Activated CD4-positive, alpha-beta T cell treated with anti-CD3 and anti-CD28 coated beads, Interleukin-2, amount 10 ng/mL, durations not matched to agents 24 days and 14 days (primary cell): ENCODE measurements at regions of chr10 and their contacts with region 1.

Region 1: GRCh38 chr10:43606322-43607198 is at the start of gene ZNF485:
- DNase-seq: peak; percentile 87
- H3K4me3 Mint-ChIP-seq: peak within 1 kb of the TSS; percentile 85
- H3K27ac Mint-ChIP-seq: peak within 1 kb of the TSS; percentile 83
- H3K4me1 Mint-ChIP-seq: peaks cover 24% of the 10 kb centered on the region
- H3K27me3 Mint-ChIP-seq: no peaks in the 10 kb centered on the region
- total RNA-seq, gene ZNF485: 7.1 and 9.2 TPM in 2 replicates

Region 2: GRCh38 chr10:42552493-42553407 is 1053.8 kb before region 1 on chr10:
- intact Hi-C with region 1: loop called (anchors 5 kb)
- DNase-seq: peak; percentile 98
- H3K4me3 Mint-ChIP-seq: peak overlapping the region; percentile 94
- H3K27ac Mint-ChIP-seq: peak overlapping the region; percentile 97
- H3K4me1 Mint-ChIP-seq: peaks cover 27% of the 10 kb centered on the region
- H3K27me3 Mint-ChIP-seq: no peaks in the 10 kb centered on the region

Region 3: DNA sequence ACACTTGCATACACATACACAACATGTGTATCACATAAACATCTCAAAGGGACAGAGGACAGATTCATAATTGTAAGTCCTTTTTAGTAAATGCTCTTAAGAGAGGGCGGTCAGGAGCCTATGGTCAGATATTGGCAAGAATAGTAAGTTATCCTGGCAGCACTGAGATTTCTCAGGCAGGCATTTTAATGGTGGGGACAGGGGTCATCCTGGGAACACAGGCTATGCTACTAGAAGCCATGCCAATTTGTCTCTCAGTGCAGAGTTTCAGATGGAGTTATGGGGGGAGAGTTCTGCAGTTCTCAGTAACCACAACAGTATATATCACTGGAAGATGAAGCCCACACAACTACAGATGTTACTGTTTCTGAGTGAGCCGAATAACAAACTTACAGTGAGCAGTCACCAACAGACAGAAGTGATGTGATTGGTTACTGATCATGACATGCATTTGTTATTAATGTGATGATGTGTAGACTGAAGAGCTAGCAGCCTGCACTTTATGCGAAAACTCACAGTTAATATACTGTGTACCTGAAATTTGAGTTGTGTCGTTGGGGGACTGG is 153.2 kb before region 1 on chr10:
- intact Hi-C with region 1: no loop called
- DNase-seq: no peak
- H3K4me3 Mint-ChIP-seq: peak overlapping the region; percentile 47
- H3K27ac Mint-ChIP-seq: peak overlapping the region; percentile 85
- H3K4me1 Mint-ChIP-seq: peaks cover 40% of the 10 kb centered on the region
- H3K27me3 Mint-ChIP-seq: no peaks in the 10 kb centered on the region

Region 4: GRCh38 chr10:43594944-43595589 is 11.5 kb before region 1 on chr10:
- intact Hi-C with region 1: loop called (anchors 1 kb)
- DNase-seq: peak; percentile 84
- H3K4me3 Mint-ChIP-seq: peak overlapping the region; percentile 69
- H3K27ac Mint-ChIP-seq: peak overlapping the region; percentile 85
- H3K4me1 Mint-ChIP-seq: peaks cover 24% of the 10 kb centered on the region
- H3K27me3 Mint-ChIP-seq: peaks cover 10% of the 10 kb centered on the region

Region 5: DNA sequence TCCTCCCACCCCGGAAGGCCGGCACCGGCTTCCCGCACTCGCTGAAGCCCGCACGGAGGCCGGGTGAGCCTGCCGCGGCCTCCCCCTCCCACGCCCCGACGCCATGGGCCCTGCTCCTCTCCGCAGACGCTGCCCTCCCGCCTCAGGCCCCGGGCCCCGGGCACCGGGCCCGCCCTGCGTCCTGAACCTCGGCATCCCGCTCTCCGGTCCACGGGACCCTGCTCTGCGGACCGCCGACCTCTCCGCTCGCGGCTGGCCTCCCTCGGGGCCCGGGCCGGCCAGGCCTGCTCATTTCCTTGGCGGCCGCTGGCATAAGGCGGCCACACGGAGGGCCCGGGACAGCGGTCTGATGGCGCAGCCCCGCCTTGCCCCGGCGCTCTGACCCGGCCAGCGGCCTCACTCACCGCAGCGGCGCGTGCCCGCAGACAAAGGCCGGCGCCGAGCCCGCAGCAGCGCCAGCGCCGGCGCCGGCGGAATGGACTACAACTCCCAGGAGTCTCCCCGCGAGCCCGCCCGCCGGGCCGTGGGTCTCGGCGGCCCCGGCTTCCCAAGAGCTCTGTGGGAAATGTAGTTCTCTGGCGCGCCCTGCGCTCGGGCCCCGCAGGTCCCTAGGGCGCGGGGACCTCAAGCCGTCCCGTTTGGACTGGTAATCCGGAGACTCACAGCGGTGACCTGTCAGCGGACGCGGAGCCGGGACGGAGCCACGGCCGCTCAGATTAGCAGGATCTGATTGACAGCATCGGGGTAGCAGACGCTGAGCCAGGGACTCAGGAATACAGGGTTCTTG is 42.0 kb after region 1 on chr10 and contains the start of gene ZNF32:
- intact Hi-C with region 1: loop called (anchors 1 kb)
- DNase-seq: peak; percentile 95
- H3K4me3 Mint-ChIP-seq: peak within 1 kb of the TSS; percentile 91
- H3K27ac Mint-ChIP-seq: peak within 1 kb of the TSS; percentile 89
- H3K4me1 Mint-ChIP-seq: peaks cover 6% of the 10 kb centered on the region
- H3K27me3 Mint-ChIP-seq: peaks cover 12% of the 10 kb centered on the region
- total RNA-seq, gene ZNF32: 14.9 and 15.2 TPM in 2 replicates

Region 6: GRCh38 chr10:44240584-44241205 is 634.1 kb after region 1 on chr10:
- intact Hi-C with region 1: no loop called
- DNase-seq: no peak
- H3K4me3 Mint-ChIP-seq: no peak overlapping the region
- H3K27ac Mint-ChIP-seq: no peak overlapping the region
- H3K4me1 Mint-ChIP-seq: no peaks in the 10 kb centered on the region
- H3K27me3 Mint-ChIP-seq: no peaks in the 10 kb centered on the region